ENCODE measurements at regions of chr19 and their contacts with region 1.

Region 1: DNA sequence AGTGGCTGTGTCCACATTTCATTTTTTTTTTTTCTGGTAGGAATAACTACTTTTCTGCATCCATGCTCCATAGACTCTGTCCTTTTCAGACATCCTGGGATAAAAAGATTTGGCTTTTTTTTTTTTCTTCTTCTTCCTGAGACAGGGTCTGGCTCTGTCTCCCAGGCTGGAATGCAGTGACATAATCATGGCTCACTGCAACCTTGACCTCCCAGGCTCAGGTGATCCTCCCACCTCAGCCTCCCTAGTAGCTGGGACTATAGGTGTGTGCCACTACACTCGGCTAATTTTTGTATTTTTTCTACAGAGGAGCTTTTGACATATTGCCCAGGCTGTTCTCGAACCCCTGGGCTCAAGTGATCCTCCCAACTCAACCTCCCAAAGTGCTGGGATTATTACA is 4.1 kb upstream of the ICAM3 start:
- DNase-seq: no peak
- ATAC-seq: no peak
- H3K4me3 Mint-ChIP-seq: no peak overlapping the region
- H3K27ac Mint-ChIP-seq: no peak overlapping the region
- H3K4me1 Mint-ChIP-seq: peaks cover 21% of the 10 kb centered on the region
- H3K27me3 Mint-ChIP-seq: no peaks in the 10 kb centered on the region
- CTCF ChIP-seq: no peak

Region 2: DNA sequence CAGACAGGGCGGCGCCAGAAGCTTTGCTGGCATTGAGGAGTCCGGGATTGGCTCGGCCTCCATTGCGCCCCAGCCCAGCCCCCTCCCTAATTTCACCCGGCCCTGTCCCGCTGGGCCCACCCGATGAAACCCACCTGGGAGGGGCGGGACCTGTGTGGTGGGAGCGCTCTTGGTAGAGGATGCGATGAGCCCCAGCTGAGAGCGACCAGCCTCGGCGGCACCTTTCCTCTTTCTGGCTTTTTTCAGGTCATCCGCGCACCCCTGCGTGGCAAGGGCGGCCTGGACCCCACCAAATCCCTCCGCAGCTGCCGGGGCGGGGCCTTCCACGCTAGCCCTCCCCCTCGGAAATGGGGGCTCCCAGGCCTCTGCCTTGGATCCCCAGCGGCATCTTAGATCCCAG is 34.1 kb before region 1 on chr19 and contains the start of gene ZGLP1:
- CTCF ChIA-PET with region 1: no interaction called
- POLR2A ChIA-PET with region 1: no interaction called
- DNase-seq: no peak
- ATAC-seq: no peak
- H3K4me3 Mint-ChIP-seq: no peak within 1 kb of the TSS
- H3K27ac Mint-ChIP-seq: no peak within 1 kb of the TSS
- H3K4me1 Mint-ChIP-seq: peaks cover 2% of the 10 kb centered on the region
- H3K27me3 Mint-ChIP-seq: no peaks in the 10 kb centered on the region
- CTCF ChIP-seq: no peak
- total RNA-seq, gene ZGLP1: 5.9 to 8.9 TPM (median 7.7 TPM) in 3 replicates

Region 3: DNA sequence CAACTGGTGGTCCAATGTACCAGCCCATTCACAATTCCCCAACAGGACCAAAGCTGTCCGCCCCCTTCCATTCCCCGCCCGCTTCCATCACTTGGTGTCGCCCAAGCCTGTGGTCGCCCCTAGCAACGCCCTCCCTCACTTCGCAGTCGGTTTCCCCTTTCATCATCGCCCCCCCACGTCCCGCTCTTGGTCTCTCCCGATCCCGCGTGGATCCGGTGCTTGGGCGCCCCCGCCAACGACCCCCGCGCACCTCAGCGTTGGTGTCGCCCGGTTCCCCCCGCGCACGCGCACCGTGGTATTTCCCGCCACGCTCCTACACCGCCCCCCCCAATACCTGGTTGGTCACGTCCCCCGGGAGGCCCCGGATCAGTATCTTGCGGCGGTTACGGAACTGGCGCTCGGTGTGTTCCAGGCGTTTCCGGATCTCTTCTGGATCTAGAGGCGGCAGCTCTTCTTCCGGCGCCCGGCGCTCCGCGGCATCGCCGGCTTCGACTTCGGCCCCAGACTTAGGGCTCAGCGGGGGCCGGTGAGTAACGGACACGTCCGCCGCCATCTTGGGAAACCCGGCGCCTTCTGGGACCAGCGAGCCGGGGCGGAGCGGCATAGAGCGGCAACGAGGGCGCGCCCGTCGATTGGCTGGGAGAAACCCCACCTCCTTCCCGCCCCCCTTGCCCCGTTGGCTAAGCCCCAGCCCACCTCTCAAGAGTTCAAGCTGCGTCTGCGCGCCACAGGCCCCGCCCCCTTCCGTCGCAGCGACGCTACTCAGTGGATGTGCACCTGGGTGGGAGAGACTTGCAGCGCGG is 10.3 kb before region 1 on chr19 and contains the start of gene RAVER1:
- CTCF ChIA-PET with region 1: interaction called, 11 read pairs
- POLR2A ChIA-PET with region 1: interaction called, 6 read pairs
- DNase-seq: peak; percentile 98
- ATAC-seq: peak; percentile 91
- H3K4me3 Mint-ChIP-seq: peak within 1 kb of the TSS; percentile 93
- H3K27ac Mint-ChIP-seq: peak within 1 kb of the TSS; percentile 90
- H3K4me1 Mint-ChIP-seq: peaks cover 16% of the 10 kb centered on the region
- H3K27me3 Mint-ChIP-seq: peaks cover 10% of the 10 kb centered on the region
- CTCF ChIP-seq: no peak
- total RNA-seq, gene RAVER1: 85.8 to 87.4 TPM (median 86.9 TPM) in 3 replicates

Region 4: DNA sequence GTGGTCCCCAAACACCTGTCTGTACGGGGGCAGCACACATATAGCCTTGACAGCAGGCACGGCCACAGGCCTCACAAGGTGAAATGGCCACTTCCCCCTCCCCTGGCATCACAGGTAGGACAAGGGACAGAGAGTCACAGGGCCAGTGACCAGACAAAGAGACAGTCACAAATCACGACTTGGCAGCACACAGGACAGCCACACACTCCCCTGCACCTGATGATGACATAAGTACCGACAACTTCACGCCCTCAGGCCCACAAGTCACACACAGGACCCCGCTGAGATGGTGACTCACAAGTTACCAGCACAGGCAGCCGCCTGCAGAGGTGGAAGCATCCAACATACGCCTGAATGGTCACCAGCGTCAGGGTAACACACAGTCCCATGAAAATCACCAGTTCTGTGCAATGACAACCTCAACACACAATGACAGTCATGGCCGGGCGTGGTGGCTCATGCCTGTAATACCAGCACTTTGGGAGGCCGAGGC is 20.3 kb after region 1 on chr19:
- CTCF ChIA-PET with region 1: no interaction called
- POLR2A ChIA-PET with region 1: no interaction called
- DNase-seq: no peak
- ATAC-seq: no peak
- H3K4me3 Mint-ChIP-seq: no peak overlapping the region
- H3K27ac Mint-ChIP-seq: no peak overlapping the region
- H3K4me1 Mint-ChIP-seq: no peaks in the 10 kb centered on the region
- H3K27me3 Mint-ChIP-seq: no peaks in the 10 kb centered on the region
- CTCF ChIP-seq: no peak

Region 5: GRCh38 chr19:10408511-10409283 is 65.2 kb after region 1 on chr19:
- CTCF ChIA-PET with region 1: no interaction called
- POLR2A ChIA-PET with region 1: no interaction called
- DNase-seq: no peak
- ATAC-seq: no peak
- H3K4me3 Mint-ChIP-seq: no peak overlapping the region
- H3K27ac Mint-ChIP-seq: no peak overlapping the region
- H3K4me1 Mint-ChIP-seq: peaks cover 5% of the 10 kb centered on the region; the same call in 1 of the 2 replicates
- H3K27me3 Mint-ChIP-seq: peaks cover 83% of the 10 kb centered on the region
- CTCF ChIP-seq: no peak

Measured in WTC11 (cell line).